ENCODE measurements at regions of chr1 and their contacts with region 1.

Region 1: DNA sequence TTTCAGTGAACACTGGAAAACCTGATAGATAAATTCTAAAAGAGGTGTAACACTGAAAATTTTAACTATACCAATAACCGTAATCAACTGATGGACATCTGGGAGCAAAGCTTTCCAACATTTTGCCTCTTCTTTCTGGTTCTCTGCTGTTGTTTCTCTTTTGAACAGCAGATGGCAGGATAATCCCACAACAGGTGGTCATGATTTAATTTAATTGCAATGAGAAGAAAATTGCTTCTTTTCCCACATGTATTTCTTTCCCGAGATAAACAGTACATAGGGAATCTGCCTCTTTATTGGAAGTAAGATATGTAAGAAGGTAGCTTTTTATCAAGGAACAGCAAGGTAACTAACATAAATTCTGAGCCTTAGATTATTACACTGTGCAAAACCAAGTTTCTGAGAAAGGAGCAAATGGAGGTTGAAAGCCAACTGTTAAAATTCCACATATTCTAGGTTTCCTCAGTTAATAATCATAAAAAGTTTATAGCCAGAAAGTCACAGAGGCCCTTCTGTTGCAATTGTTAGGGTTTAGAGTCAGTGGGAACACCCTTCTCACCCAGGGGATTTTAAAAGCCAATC is 72.9 kb downstream of the RPS6KA1 start:
- DNase-seq: peak; percentile 69
- H3K4me3 ChIP-seq: no peak overlapping the region; a peak in 1 of 4 replicates
- H3K27ac ChIP-seq: no peak overlapping the region
- H3K4me1 ChIP-seq: no peaks in the 10 kb centered on the region; a peak in 1 of 4 replicates
- H3K27me3 ChIP-seq: no peaks in the 10 kb centered on the region
- CTCF ChIP-seq: peak; percentile 87
- EP300 ChIP-seq: no peak
- RAD21 ChIP-seq: peak; percentile 98

Region 2: DNA sequence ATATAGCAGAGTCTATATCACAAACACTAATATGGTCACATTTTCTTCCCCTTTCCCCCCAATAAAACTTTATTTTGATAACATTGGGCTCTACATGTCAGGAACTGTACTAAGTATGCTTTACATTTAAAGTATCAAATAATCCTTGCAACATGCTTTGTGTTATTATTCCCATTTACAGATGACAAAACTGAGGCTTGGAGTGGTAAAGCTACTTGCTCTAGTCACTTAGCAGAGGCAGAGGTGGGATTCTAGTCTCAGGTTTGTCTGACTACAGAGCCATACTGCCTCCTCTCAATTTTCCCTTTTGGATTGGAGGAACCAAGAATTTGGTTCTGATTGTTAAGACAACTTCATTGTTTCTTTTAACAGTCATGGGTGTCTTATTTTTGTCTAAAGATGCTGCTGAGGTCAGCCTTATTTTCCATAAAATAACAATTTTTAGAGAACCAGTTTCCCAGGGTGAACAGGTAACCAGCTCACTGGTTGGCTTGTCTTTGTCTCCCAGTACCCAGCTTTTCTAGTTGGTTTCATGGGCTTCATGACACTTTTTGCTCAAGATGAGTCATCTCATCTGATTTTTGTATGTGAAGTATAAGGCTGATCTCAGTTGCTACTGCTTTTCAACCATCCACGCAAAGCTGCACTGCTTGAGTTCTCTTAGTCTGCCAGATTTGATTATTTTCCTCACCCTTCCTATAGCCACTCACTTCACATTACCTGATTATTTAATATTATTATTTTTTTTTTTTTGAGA is 12.4 kb after region 1 on chr1:
- CTCF ChIA-PET with region 1: interaction called, 12 read pairs
- POLR2A ChIA-PET with region 1: interaction called, 3 read pairs
- DNase-seq: no peak
- H3K4me3 ChIP-seq: no peak overlapping the region
- H3K27ac ChIP-seq: no peak overlapping the region
- H3K4me1 ChIP-seq: peaks cover 0 to 2% of the 10 kb centered on the region in 2 experiments; a peak in 2 of 4 replicates
- H3K27me3 ChIP-seq: no peaks in the 10 kb centered on the region
- CTCF ChIP-seq: no peak
- EP300 ChIP-seq: no peak
- RAD21 ChIP-seq: no peak

Region 3: DNA sequence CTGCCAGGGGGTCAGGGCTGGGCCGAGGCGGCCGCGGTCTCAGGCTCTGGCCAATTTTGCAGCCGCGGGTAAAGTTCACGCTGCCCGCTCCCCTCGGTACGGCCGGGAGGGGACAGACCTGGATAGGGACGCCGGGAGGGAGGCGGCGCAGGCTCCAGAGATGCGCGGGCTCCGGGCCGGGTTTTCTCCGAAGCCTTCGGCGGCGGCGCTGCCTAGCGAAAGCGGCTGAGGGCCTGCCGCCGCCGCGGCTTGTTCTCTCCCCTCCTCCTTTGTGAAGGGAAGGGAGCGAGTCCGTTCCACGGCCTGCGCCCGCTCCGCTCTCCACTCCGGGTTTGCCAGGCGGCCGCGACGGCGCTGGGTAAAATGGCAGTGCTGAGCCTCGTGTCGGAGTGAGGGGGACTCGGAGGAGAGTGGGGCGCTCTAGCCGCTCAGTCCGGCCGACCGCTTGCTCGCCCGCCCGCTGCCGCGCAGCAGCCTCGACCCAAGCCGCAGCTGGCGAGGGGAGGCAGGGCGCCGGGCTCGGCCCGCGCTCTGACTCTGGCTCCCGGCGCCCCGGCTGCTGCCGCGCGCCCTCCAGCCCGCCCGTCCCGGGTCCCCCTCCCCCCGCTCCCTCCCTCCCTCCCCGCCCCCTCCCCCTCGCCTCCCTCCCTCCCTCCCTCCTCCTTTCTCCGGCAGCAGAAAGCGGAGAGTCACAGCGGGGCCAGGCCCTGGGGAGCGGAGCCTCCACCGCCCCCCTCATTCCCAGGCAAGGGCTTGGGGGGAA is 93.1 kb after region 1 on chr1 and contains the start of gene ARID1A:
- CTCF ChIA-PET with region 1: interaction called, 38 read pairs
- POLR2A ChIA-PET with region 1: interaction called, 3 read pairs
- DNase-seq: peak; percentile 89
- H3K4me3 ChIP-seq: peak within 1 kb of the TSS; percentile 74 to 83
- H3K27ac ChIP-seq: peak within 1 kb of the TSS; percentile 95 to 99
- H3K4me1 ChIP-seq: peaks cover 34 to 41% of the 10 kb centered on the region in 2 experiments
- H3K27me3 ChIP-seq: no peaks in the 10 kb centered on the region
- CTCF ChIP-seq: peak; percentile 18; the same call in 1 of the 2 replicates
- EP300 ChIP-seq: peak in 1 of 2 experiments; percentile 68; a peak in 2 of 4 replicates
- RAD21 ChIP-seq: 0 out of 2 replicates have a peak, but pooled peaks have one; percentile 18
- polyA plus RNA-seq, gene ARID1A: 14.2 and 26.5 TPM in 2 replicates

Region 4: DNA sequence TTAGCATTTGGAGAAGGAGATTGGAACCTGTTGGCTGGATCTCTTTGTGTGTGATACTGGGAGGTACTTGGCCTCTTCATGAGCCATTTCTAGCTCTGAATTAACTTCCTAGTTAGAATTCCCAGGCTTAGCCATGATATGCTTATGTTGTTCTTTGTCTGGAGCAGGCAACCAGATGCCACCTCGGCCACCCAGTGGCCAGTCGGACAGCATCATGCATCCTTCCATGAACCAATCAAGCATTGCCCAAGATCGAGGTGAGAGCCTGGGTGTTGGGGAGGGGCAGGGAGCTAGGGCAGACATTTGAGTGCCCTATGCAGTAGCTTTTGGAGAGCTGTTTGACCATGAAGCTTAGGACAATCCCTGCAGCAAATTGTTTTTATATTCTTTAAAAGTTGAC is 158.7 kb after region 1 on chr1:
- CTCF ChIA-PET with region 1: interaction called, 11 read pairs
- POLR2A ChIA-PET with region 1: interaction called, 3 read pairs
- DNase-seq: peak; percentile 31
- H3K4me3 ChIP-seq: no peak overlapping the region
- H3K27ac ChIP-seq: no peak overlapping the region
- H3K4me1 ChIP-seq: no peaks in the 10 kb centered on the region; a peak in 1 of 4 replicates
- H3K27me3 ChIP-seq: no peaks in the 10 kb centered on the region
- CTCF ChIP-seq: peak; percentile 34
- EP300 ChIP-seq: no peak
- RAD21 ChIP-seq: peak; percentile 33; the same call in 1 of the 2 replicates

Region 5: DNA sequence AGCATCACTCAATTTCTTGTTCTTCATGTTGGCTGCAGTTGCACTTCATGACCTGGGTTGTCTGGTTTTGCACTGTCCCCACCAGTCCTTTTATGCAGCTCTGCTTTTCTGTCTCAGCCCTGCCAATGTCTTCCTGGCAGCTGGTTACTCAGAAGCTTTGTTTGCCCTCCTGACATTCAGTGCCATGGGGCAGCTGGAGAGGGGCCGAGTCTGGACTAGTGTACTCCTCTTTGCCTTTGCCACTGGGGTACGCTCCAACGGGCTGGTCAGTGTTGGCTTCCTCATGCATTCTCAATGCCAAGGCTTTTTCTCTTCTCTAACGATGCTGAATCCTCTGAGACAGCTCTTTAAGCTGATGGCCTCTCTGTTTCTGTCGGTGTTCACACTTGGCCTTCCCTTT is 191.9 kb after region 1 on chr1:
- CTCF ChIA-PET with region 1: interaction called, 311 read pairs
- POLR2A ChIA-PET with region 1: interaction called, 5 read pairs
- DNase-seq: no peak
- H3K4me3 ChIP-seq: no peak overlapping the region
- H3K27ac ChIP-seq: no peak overlapping the region
- H3K4me1 ChIP-seq: peaks cover 0 to 5% of the 10 kb centered on the region in 2 experiments; a peak in 2 of 4 replicates
- H3K27me3 ChIP-seq: no peaks in the 10 kb centered on the region
- CTCF ChIP-seq: no peak
- EP300 ChIP-seq: no peak
- RAD21 ChIP-seq: no peak

Region 6: DNA sequence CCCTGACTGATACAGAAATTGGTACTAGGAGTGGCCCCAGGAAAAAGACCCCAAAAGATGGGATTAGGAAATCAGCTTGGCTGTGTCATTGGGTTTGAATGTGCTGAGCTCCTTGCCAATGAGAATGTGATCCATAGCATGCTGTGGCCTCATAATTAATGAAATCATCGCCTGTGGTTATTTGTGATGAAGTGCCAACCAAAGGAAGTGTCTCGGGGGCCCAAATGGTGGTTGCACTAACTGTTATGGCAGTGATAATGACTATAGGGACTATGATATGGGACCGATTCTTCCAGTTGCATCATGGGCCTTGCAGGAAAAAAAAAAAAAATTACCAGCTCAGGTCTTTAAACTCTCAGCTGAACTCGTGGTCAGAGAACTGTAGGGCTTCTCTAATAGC is 208.6 kb after region 1 on chr1:
- CTCF ChIA-PET with region 1: interaction called, 47 read pairs
- POLR2A ChIA-PET with region 1: no interaction called
- DNase-seq: no peak
- H3K4me3 ChIP-seq: no peak overlapping the region
- H3K27ac ChIP-seq: no peak overlapping the region
- H3K4me1 ChIP-seq: no peaks in the 10 kb centered on the region
- H3K27me3 ChIP-seq: no peaks in the 10 kb centered on the region
- CTCF ChIP-seq: no peak
- EP300 ChIP-seq: no peak
- RAD21 ChIP-seq: no peak

Region 7: DNA sequence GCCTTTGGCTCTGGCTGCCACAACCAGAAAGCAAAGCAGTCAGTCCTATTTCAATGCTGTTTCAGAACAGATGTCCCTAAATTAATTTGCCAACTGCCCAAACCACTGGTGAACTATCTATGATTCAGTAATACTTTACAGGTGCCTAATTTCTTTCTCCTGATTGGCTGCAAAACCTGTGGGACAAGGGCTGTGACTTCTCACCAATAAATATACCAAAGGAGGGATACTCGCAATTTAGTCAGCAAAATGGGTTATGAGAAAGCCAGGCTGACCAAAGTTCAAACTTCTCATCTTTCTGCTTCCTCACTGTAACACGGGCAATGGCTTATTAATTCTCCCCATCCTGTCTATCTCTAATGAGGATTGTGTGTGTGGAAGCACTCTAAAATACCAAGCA is 274.9 kb after region 1 on chr1:
- CTCF ChIA-PET with region 1: interaction called, 12 read pairs
- POLR2A ChIA-PET with region 1: no interaction called
- DNase-seq: no peak
- H3K4me3 ChIP-seq: no peak overlapping the region
- H3K27ac ChIP-seq: no peak overlapping the region; a peak in 1 of 4 replicates
- H3K4me1 ChIP-seq: peaks cover 0 to 6% of the 10 kb centered on the region in 2 experiments; a peak in 1 of 4 replicates
- H3K27me3 ChIP-seq: no peaks in the 10 kb centered on the region
- CTCF ChIP-seq: no peak
- EP300 ChIP-seq: no peak
- RAD21 ChIP-seq: no peak

Region 8: DNA sequence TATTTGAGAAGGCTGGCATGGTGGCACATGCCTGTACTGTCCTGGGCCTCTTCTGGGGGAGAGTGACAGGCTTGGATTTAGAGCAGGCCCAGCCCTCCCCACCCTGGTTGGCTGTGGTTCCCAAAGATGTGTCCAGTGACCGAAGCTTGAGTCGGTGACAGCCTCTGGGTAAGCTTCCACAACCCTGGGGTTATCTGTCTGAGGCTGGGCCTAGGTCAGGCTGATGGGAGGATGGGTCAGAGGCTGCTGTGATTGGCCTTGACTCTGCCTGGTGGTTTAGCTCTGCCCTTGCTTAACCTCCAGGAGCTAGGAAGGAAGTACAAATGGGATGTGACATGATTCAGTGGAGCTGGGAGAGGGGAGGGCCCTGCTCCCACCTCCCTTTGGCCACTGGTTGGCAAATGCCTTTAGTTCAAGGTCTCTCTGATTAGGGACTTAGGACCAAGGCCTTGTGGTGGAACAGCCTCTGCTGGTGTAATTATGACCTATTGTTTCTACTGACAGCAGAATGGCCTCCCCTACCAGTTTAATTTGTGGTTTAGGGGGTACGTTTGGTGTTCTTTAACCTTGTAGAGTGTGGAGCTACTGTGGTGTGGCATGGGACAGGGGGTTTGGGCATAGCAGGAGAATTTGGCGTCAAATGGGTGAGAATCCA is 335.7 kb after region 1 on chr1:
- CTCF ChIA-PET with region 1: no interaction called
- POLR2A ChIA-PET with region 1: no interaction called
- DNase-seq: no peak
- H3K4me3 ChIP-seq: no peak overlapping the region
- H3K27ac ChIP-seq: no peak overlapping the region
- H3K4me1 ChIP-seq: no peaks in the 10 kb centered on the region
- H3K27me3 ChIP-seq: no peaks in the 10 kb centered on the region
- CTCF ChIP-seq: no peak
- EP300 ChIP-seq: no peak
- RAD21 ChIP-seq: no peak

Measured in SK-N-SH (cell line).